Activated CD4-positive, alpha-beta memory T cell treated with anti-CD3 and anti-CD28 coated beads for 36 hours (primary cell): ENCODE measurements at regions of chr2 and their contacts with region 1.

Region 1: GRCh38 chr2:218395797-218396687 is 3.6 kb upstream of the CTDSP1 start:
- DNase-seq: peak; percentile 96
- H3K4me3 Mint-ChIP-seq: peak overlapping the region; percentile 90
- H3K27ac Mint-ChIP-seq: peak overlapping the region; percentile 88
- H3K4me1 Mint-ChIP-seq: peaks cover 34% of the 10 kb centered on the region
- H3K27me3 Mint-ChIP-seq: no peaks in the 10 kb centered on the region

Region 2: DNA sequence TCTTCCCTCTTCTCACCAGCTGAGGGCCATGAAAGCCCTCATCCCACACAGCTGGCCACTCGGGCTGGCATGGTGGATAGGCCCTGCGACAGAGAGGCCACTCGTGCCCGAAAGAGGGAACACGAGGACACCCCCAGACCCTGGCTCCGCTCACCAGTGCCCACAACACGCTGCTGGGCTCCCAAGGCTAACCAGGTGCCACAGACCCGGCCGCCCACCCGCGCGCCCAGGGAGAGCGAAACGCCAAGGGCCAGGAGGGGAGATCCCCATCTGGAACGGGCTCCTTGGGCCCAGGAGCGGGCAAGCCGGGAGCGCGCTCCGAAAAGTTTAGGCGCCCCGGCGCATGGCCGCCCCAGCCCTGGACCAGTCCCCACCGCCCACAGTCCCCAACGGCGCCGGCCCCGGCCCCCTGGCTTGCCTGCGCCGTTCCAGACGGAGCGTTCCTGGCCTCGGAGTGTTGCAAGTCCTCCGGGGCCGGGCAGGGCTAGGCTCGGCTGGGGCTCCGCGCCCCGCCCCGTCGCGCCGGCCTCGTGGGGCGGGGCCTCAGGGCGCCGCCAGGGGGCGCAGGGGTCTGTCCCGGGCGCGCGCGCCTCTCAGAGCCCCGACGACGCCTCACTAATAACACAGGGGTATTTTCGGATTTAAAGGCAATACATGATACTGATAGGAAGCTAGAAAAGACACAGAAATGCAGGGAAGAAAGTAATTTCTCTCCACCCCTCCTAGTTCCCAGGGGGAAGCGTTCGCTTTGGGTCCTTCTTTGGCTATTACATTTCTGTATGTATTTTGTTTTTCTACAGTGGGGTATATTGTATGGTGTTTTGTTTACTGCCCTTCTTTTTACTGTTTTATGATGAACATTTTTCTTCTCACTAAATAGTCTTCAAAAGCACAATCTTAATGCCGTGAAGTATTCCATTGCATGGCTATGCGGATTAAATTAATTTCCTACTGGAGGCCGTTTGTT is 103.7 kb before region 1 on chr2 and contains the start of gene TMBIM1:
- CTCF ChIA-PET with region 1: interaction called, 10 read pairs
- POLR2A ChIA-PET with region 1: interaction called, 10 read pairs
- intact Hi-C with region 1: loop called (anchors 1 kb)
- DNase-seq: peak; percentile 83
- H3K4me3 Mint-ChIP-seq: peak within 1 kb of the TSS; percentile 80
- H3K27ac Mint-ChIP-seq: peak within 1 kb of the TSS; percentile 89
- H3K4me1 Mint-ChIP-seq: peaks cover 51% of the 10 kb centered on the region
- H3K27me3 Mint-ChIP-seq: no peaks in the 10 kb centered on the region
- total RNA-seq, gene TMBIM1: 71.8 to 79.2 TPM

Region 3: DNA sequence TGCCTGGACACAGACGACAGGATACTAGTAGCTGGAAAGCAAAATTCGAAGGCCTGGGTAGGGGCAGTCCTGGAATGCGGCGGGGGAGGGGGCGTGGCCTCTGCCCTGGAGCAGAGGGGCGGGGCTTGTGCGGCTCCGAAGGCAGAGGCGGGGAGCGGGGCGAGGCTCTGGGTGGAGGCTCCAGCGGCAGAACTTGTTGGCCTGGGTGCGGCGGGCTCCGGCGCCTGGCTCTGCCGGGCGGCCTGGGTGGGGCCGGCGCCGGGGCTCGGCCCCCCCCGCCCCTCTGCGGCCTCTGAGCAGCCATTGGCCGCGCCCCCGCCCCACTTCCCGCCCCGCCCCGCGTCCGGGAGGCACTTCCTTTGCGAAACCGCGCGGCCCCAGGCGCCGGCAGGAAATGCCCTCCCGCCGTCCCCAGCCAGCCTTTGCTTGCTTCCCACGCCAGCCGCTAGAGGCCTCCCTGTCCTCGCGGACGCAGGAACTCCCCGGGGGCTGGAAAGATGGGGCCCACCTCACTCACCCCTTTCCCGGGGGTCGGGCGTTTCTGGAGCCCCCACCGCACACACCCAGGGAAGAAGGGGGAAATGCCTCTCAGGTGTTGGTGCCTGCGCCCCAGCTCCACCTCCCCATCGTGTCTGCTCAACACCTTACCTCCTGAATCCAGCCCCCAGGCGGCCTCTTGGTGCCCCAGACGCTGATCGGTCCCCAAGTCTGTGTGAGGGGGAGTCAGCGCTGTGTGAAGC is 10.3 kb after region 1 on chr2:
- CTCF ChIA-PET with region 1: interaction called, 4 read pairs
- POLR2A ChIA-PET with region 1: interaction called, 5 read pairs
- intact Hi-C with region 1: loop called (anchors 1 kb)
- DNase-seq: peak; percentile 97
- H3K4me3 Mint-ChIP-seq: peak overlapping the region; percentile 71
- H3K27ac Mint-ChIP-seq: peak overlapping the region; percentile 81
- H3K4me1 Mint-ChIP-seq: peaks cover 42% of the 10 kb centered on the region
- H3K27me3 Mint-ChIP-seq: peaks cover 5% of the 10 kb centered on the region

Region 4: GRCh38 chr2:218671654-218672566 is 275.9 kb after region 1 on chr2 and contains the starts of genes RNF25 and STK36:
- CTCF ChIA-PET with region 1: no interaction called
- POLR2A ChIA-PET with region 1: no interaction called
- intact Hi-C with region 1: loop called (anchors 5 kb)
- DNase-seq: peak; percentile 90
- H3K4me3 Mint-ChIP-seq: peak within 1 kb of the TSS; percentile 96
- H3K27ac Mint-ChIP-seq: peak within 1 kb of the TSS; percentile 89
- H3K4me1 Mint-ChIP-seq: peaks cover 22% of the 10 kb centered on the region
- H3K27me3 Mint-ChIP-seq: no peaks in the 10 kb centered on the region
- total RNA-seq, gene RNF25: 15.2 to 15.6 TPM
- total RNA-seq, gene STK36: 15.9 to 19.0 TPM

Region 5: DNA sequence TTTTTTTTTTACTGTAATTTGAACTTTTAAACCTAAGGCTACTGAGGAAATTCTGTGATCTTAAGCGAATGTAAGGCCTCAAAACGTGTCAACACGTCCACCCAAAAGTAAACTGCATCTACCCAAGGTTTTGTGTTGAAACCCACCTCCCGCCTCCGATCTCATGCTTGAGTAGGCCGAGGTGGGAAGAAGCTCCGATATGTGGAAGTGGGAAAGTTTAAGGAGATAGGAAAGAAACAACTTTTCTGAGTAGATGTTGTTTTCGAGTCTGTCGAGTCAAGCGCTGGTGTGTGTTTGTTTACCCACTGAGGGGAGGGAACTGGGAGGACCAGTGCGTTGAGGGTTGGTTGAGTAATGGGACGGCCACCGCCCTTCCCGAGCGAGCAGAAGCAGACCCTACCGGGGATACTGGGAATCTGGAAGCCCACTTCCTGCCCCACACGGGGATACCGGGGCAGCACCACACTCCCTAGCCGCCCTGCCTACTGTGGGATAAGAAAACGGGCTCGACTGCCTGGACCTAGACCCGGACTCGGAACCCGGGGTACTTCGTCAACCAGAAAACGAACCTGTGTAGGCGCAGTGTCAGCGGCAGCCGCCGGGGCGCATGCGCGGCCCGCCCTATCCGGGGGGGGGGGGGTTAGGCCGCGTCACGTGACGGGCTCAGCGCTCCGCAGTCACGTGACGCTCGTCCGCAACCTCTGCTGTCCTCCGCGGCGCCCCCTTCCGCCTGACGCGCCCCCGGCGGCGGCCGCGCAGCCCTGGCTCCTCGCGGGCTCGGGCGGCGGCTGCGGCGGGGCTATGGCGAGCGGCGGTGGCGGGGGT is 781.7 kb after region 1 on chr2 and contains the start of gene RETREG2:
- CTCF ChIA-PET with region 1: no interaction called
- POLR2A ChIA-PET with region 1: no interaction called
- intact Hi-C with region 1: loop called (anchors 2 kb)
- DNase-seq: peak; percentile 86
- H3K4me3 Mint-ChIP-seq: peak within 1 kb of the TSS; percentile 95
- H3K27ac Mint-ChIP-seq: peak within 1 kb of the TSS; percentile 99
- H3K4me1 Mint-ChIP-seq: peaks cover 52% of the 10 kb centered on the region
- H3K27me3 Mint-ChIP-seq: no peaks in the 10 kb centered on the region
- total RNA-seq, gene RETREG2: 60.3 to 67.9 TPM